ENCODE measurements at regions of chr17 and their contacts with region 1.

Region 1: DNA sequence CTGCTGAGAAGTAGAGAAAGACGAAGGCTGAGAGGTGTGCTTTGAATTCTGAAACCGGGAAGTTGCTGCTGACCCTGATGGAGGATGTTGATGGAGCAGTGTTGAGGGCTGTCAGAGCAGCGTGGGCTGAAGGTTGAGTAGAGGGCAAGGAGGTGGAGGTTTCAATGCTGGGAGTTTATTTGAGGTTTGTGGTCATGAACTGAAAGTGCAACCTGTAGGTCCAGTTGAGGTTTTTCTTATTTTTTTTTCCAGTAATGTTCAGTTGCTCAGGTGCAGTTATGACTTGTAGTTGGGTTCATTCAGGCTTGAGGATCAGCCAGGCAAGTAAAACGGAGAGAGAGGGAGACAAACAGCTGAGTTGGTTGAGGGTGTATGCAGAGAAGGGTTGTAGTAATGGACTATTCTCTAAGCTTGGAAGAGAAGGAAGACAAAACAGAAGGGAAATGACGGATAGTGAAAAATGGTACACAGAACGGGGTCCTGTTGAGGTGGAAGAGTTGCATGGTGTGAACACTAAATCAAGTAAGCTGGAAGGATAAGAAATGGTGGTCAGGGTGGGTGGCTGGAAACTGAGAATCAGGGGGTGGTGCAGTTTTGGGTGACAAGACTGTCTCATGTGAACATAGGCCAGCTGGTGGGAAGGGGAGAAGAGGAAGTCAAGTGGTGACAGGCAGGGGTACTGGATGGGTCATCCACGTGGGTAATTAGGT is 8.7 kb upstream of the UBE2G1 start:
- DNase-seq: peak; percentile 67
- H3K4me3 Mint-ChIP-seq: peak overlapping the region; percentile 68
- H3K27ac Mint-ChIP-seq: peak overlapping the region; percentile 92
- H3K4me1 Mint-ChIP-seq: peaks cover 30% of the 10 kb centered on the region
- H3K27me3 Mint-ChIP-seq: no peaks in the 10 kb centered on the region

Region 2: DNA sequence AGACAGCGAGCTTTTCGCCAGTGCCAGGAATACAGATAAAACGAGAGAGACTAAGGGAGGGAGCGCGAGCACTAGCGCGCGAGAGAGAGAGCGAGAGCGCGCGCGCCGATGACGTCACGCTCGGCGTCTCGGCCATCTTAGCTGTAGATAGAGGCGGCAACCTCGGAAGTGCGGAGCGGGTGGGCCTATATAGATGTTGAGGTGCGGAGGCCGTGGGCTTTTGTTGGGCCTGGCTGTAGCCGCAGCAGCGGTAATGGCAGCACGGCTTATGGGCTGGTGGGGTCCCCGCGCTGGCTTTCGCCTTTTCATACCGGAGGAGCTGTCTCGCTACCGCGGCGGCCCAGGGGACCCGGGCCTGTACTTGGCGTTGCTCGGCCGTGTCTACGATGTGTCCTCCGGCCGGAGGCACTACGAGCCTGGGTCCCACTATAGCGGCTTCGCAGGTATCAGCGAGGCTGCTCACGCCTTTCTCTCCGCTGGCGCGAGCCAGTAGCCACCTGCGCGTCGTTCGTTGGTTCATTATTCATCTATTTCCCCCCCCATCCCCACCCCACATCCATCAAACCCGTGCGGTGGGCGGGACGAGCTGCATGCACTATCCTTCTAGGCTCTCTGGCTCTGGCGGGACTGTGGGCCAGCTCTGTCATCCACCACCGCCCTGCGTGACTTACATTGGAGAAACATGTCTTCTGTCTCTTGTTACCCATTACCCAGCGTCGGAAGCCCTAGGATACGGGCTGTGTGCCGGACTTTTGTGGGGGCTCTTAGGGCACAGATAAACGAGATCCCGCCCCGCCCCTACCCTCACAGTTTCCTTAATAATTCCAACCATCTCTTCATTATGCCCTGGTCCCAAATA is 231.4 kb before region 1 on chr17:
- intact Hi-C with region 1: loop called (anchors 2 kb)
- DNase-seq: peak; percentile 88
- H3K4me3 Mint-ChIP-seq: peak overlapping the region; percentile 98
- H3K27ac Mint-ChIP-seq: peak overlapping the region; percentile 100
- H3K4me1 Mint-ChIP-seq: peaks cover 32% of the 10 kb centered on the region
- H3K27me3 Mint-ChIP-seq: no peaks in the 10 kb centered on the region

Region 3: DNA sequence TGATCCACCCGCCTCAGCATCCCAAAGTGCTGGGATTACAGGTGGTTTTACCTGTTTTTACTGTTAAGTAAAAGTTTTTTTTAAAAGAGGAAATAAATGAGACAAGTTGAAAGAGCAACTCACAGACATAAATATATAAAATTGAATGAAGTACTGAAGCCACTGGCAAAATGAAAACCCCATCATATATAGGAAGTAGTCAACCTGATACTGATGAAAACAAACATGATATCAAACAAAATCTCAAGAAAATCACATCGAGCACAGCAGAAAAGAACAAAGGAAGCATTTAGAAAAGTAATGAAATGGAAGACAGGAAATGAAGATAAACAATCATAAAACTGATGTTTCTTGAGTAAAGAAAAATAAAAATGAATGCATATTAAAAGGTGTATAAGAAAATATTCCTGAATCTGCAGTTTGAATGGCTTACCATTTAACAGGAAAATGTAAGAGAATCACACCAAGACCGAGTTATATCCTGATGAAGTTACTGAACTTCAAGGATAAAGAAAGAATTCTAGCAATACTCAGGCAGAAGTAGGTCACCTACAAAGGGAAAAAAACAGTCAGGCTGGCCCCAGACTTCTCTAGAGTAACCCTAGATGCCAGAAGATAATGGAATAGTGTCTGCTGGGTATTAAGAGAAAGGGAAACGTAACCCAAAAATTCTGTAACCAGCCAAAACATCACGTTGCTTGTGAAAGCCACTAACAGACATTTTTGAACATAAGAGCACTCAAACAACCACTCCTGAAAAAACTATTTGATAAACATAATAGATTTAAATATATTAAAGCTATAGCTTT is 40.2 kb before region 1 on chr17:
- intact Hi-C with region 1: loop called (anchors 2 kb)
- DNase-seq: no peak
- H3K4me3 Mint-ChIP-seq: peak overlapping the region; percentile 34
- H3K27ac Mint-ChIP-seq: peak overlapping the region; percentile 77
- H3K4me1 Mint-ChIP-seq: peaks cover 35% of the 10 kb centered on the region
- H3K27me3 Mint-ChIP-seq: no peaks in the 10 kb centered on the region

Region 4: GRCh38 chr17:4394208-4395110 is 19.3 kb after region 1 on chr17:
- intact Hi-C with region 1: loop called (anchors 1 kb)
- DNase-seq: no peak
- H3K4me3 Mint-ChIP-seq: no peak overlapping the region
- H3K27ac Mint-ChIP-seq: no peak overlapping the region
- H3K4me1 Mint-ChIP-seq: peaks cover 25% of the 10 kb centered on the region
- H3K27me3 Mint-ChIP-seq: no peaks in the 10 kb centered on the region

Region 5: DNA sequence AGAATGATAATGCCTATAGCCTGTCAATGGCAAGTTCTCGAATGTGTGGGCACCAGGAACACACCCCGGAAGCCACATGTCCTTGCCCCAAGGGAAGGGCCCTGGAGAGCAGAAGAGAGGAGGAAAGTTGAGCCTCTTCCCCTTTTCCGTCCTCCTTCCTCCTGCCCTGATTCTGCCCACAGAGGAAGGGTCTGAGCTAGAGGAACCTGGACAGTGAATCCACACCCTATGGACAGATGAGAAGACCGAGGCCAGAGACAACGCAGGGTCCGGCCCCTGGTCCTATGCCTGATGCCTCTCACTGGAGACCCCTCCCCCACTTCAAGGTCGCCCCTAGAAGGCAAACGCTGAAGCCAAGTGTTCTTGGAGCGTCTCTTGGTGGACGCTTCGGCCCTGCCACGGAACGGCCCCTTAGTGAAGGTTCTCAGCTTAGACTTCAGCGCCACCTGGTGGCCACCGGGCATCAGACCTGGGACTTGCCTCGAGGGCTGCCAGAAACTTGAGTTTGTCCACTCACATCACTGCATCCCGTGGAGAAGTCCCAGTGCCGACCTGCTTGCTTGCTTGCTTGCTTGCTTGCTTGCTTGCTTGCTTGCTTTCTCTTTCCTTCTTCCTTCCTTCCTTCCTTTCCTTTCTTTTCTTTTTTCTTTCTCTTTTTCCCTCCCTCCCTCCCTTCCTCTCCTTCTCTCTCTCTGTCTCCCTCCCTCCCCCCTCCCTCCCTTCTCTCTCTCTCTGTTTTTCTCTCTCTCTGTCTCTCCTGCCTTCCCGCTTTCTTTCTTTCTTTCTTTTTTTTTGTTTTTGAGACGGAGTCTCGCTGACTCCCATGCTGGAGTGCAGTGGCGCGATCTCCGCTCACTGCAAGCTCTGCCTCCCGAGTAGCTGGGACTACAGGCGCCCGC is 38.0 kb after region 1 on chr17:
- intact Hi-C with region 1: loop called (anchors 5 kb)
- DNase-seq: peak; percentile 83
- H3K4me3 Mint-ChIP-seq: peak overlapping the region; percentile 57
- H3K27ac Mint-ChIP-seq: peak overlapping the region; percentile 76
- H3K4me1 Mint-ChIP-seq: peaks cover 5% of the 10 kb centered on the region
- H3K27me3 Mint-ChIP-seq: no peaks in the 10 kb centered on the region

Measured in activated T-helper 2 cell treated with anti-CD3 and anti-CD28 coated beads, Interferon-gamma antibody, Interleukin-2, Interleukin-4, amounts not matched to agents 10 μg/mL and 5 μg/mL and 100 μg/mL, durations not matched to agents 14 hours and 24 hours and 36 hours (primary cell).